A549 (cell line): ENCODE measurements at regions of chr17 and their contacts with region 1.

Region 1: GRCh38 chr17:65231662-65232335 is 94.6 kb downstream of the RGS9 start:
- DNase-seq: peak; percentile 76 to 94
- ATAC-seq: peak; percentile 89 to 96
- H3K4me3 ChIP-seq: no peak overlapping the region
- H3K27ac ChIP-seq: no peak overlapping the region
- H3K4me1 ChIP-seq: no peaks in the 10 kb centered on the region
- CTCF ChIP-seq: peak; percentile 89
- EP300 ChIP-seq: no peak
- POLR2A ChIP-seq: no peak
- RAD21 ChIP-seq: peak; percentile 95 to 97

Region 2: GRCh38 chr17:65243802-65244220 is 12.0 kb after region 1 on chr17:
- CTCF ChIA-PET with region 1: interaction called, 29 read pairs
- POLR2A ChIA-PET with region 1: no interaction called
- DNase-seq: no peak
- ATAC-seq: no peak; a peak in 1 of 6 replicates
- H3K4me3 ChIP-seq: no peak overlapping the region
- H3K27ac ChIP-seq: no peak overlapping the region
- H3K4me1 ChIP-seq: no peaks in the 10 kb centered on the region
- CTCF ChIP-seq: no peak
- EP300 ChIP-seq: no peak
- POLR2A ChIP-seq: no peak
- RAD21 ChIP-seq: no peak

Region 3: DNA sequence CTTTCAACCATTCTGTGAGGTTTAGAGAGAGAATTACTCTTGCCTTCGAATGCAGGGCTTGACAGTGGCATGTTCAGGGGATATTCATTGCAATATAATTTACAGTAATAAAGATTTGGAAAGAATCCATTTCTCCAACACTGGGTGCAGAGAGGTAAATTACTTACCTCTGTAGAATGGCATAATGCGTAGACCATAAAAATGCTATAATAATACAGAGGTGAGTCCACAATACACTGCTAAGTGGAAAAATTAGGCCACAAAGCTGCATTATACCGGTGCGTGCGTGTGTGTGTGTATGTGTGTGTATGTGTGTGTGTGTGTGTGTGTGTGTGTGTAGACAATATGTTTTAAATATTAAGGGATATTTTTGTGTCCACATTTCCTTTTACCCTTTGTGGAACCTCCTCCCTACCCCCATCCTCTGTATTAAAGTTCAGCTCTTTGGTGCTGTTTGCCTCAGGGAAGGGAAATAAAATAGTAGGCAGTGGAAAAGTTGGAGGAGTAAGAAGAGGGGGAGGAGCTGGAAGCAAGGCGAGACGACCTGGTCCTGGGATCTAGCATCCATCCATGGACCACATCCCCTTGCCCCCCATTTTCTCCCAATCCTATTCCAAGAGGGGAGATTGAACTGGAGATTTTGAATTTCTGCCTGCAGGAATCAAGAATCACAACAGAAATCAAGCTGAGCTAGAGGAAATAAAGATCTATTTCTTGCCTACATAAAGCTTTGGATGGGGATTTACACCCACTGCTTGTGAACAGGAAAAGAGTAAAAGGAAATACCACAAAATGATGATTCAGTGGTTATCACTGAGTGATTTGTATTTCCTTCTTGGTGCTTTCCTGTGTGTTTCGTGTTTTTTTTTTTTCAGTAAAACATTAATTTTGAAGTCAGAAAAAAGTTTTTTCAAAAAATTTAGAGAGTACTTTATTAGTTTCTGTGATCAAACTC is 30.2 kb after region 1 on chr17:
- CTCF ChIA-PET with region 1: interaction called, 10 read pairs
- POLR2A ChIA-PET with region 1: no interaction called
- DNase-seq: no peak
- ATAC-seq: no peak
- H3K4me3 ChIP-seq: no peak overlapping the region
- H3K27ac ChIP-seq: no peak overlapping the region
- H3K4me1 ChIP-seq: no peaks in the 10 kb centered on the region
- CTCF ChIP-seq: no peak
- EP300 ChIP-seq: no peak
- POLR2A ChIP-seq: no peak
- RAD21 ChIP-seq: no peak

Region 4: GRCh38 chr17:65307081-65307960 is 75.5 kb after region 1 on chr17:
- CTCF ChIA-PET with region 1: no interaction called
- POLR2A ChIA-PET with region 1: no interaction called
- DNase-seq: no peak
- ATAC-seq: peak; percentile 42 to 64; a peak in 3 of 6 replicates
- H3K4me3 ChIP-seq: no peak overlapping the region
- H3K27ac ChIP-seq: no peak overlapping the region
- H3K4me1 ChIP-seq: no peaks in the 10 kb centered on the region
- CTCF ChIP-seq: no peak
- EP300 ChIP-seq: no peak
- POLR2A ChIP-seq: no peak
- RAD21 ChIP-seq: no peak

Region 5: DNA sequence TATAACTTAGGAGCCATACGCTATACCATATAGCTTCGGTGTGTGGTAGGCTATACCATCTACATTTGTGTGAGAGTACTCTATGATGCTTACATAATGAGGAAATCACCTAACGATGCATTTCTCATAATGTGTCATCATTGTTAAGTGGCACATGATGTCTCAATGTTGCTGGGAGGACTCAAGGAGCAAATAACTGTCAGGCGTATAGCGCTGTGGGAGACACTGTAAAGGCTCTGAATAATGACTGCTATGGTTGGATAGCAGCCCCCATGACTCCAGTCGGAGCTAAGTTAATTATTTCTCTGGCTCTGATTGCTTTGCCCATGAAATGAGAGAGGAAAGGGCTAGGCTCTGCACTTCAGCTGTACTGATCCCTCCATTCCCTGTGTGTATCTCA is 102.6 kb after region 1 on chr17:
- CTCF ChIA-PET with region 1: no interaction called
- POLR2A ChIA-PET with region 1: no interaction called
- DNase-seq: no peak
- ATAC-seq: no peak
- H3K4me3 ChIP-seq: no peak overlapping the region
- H3K27ac ChIP-seq: no peak overlapping the region
- H3K4me1 ChIP-seq: no peaks in the 10 kb centered on the region
- CTCF ChIP-seq: no peak
- EP300 ChIP-seq: no peak
- POLR2A ChIP-seq: no peak
- RAD21 ChIP-seq: no peak

Region 6: GRCh38 chr17:65556014-65556909 is 324.5 kb after region 1 on chr17:
- CTCF ChIA-PET with region 1: interaction called, 22 read pairs
- POLR2A ChIA-PET with region 1: no interaction called
- DNase-seq: peak; percentile 69 to 78
- ATAC-seq: peak; percentile 21 to 81; a peak in 3 of 6 replicates
- H3K4me3 ChIP-seq: no peak overlapping the region
- H3K27ac ChIP-seq: peak overlapping the region in 1 of 2 experiments; percentile 37; a peak in 3 of 6 replicates
- H3K4me1 ChIP-seq: peaks cover 31% of the 10 kb centered on the region
- CTCF ChIP-seq: peak; percentile 87
- EP300 ChIP-seq: no peak
- POLR2A ChIP-seq: no peak
- RAD21 ChIP-seq: peak; percentile 69 to 70